Activated naive CD8-positive, alpha-beta T cell treated with anti-CD3 and anti-CD28 coated beads, Interleukin-2, amount 10 ng/mL, durations not matched to agents 7 days and 5 days (primary cell): ENCODE measurements at regions of chr12 and their contacts with region 1.

Region 1: DNA sequence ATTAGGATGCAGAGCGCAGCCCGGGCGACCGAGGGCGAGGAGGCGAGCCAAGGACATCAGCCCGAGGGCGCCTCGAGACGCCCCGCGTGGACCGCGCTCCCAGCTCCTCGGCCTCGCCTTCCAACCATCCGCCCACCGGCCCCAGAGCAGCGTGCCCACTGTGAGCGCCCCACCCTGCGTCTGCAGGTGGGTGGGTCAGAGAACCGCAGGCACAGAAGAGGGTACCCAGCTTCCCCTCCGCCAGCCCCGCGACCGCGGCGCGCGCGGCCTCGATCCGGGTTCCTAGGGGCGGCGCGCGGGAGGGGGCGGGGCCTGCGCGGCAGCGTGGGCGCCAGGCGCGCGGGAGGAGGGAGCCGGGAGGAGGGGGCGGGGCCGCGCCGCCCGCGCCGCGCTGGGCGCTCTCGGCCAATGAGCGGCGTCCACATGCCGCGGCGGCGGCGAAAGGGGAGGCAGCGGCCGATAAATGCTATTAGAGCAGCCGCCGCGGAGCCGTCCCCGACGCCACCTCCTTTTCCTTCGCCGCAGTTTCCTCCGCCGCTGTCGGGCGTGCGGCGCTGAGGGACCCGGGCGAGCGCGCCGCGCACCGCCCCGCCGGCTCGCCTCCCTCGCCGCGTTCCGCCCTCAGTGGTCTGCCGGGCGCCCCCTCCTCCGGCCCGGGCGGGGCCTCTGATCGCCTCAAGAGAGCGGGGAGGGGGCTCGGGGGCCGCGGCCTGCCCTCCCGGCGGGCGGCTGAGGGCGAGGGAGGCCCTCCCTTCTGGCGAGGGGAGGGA is at the start of gene ATP2A2:
- DNase-seq: peak; percentile 95
- ATAC-seq: peak; percentile 86
- H3K4me3 Mint-ChIP-seq: peak within 1 kb of the TSS; percentile 89
- H3K27ac Mint-ChIP-seq: peak within 1 kb of the TSS; percentile 88
- H3K4me1 Mint-ChIP-seq: peaks cover 34% of the 10 kb centered on the region
- H3K27me3 Mint-ChIP-seq: peaks cover 17% of the 10 kb centered on the region
- total RNA-seq, gene ATP2A2: 96.1 to 100.0 TPM

Region 2: GRCh38 chr12:110124184-110124995 is 156.6 kb before region 1 on chr12 and contains the start of gene IFT81:
- POLR2A ChIA-PET with region 1: interaction called, 14 read pairs
- DNase-seq: peak; percentile 97
- ATAC-seq: peak; percentile 89
- H3K4me3 Mint-ChIP-seq: peak within 1 kb of the TSS; percentile 87
- H3K27ac Mint-ChIP-seq: peak within 1 kb of the TSS; percentile 75
- H3K4me1 Mint-ChIP-seq: peaks cover 8% of the 10 kb centered on the region
- H3K27me3 Mint-ChIP-seq: peaks cover 30% of the 10 kb centered on the region
- total RNA-seq, gene IFT81: 1.7 to 2.4 TPM